H1 (cell line): ENCODE measurements at regions of chr11 and their contacts with region 1.

Region 1: GRCh38 chr11:15826826-15827225 is 529.5 kb downstream of the SOX6 start:
- DNase-seq: peak; percentile 39 to 97
- H3K4me3 ChIP-seq: no peak overlapping the region
- H3K27ac ChIP-seq: no peak overlapping the region
- H3K4me1 ChIP-seq: no peaks in the 10 kb centered on the region
- H3K27me3 ChIP-seq: peaks cover 0 to 3% (median 0%) of the 10 kb centered on the region in 4 experiments; a peak in 1 of 7 replicates
- CTCF ChIP-seq: peak; percentile 88 to 93 (median 89)
- EP300 ChIP-seq: no peak
- POLR2A ChIP-seq: no peak
- RAD21 ChIP-seq: peak; percentile 92

Region 2: DNA sequence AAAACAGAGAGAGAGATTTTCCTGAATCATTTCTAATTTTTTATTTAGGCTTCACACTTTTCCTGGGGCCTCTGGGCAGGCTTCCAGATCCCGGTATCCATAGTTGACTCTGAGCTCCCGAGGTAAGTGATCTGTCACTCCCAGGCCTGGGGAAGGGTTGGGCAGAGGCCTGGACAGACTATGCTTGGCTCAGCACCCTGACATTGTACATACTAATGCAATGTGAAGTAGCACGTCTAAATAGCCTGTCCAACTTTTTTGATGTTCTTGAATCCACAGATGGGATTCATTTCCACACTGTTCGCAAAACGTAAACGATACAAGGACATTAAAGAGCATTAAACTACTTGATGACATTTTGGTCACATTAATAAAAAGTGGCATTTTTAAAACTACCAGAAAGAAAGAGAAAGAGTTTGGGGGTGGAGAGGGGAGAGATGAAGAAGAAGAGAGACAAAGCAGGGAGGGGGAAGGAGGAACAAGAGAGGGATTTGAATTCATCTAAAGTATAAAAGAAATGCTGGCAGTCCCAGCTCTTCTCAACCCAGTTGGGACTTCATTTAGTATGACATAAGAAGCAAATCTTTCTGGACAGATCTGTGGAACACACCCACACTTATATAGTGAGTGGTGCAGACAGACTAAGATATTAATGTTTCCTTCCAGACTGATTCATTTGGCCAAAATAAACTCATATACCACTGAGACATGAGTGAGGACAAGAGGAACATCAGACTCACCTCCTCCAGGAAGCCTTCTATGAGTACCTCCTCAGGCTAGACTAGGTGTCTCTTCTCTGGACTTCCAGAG is 15.3 kb after region 1 on chr11:
- CTCF ChIA-PET with region 1: interaction called, 10 read pairs
- POLR2A ChIA-PET with region 1: no interaction called
- DNase-seq: no peak
- H3K4me3 ChIP-seq: no peak overlapping the region
- H3K27ac ChIP-seq: no peak overlapping the region
- H3K4me1 ChIP-seq: peaks cover 0 to 19% (median 14%) of the 10 kb centered on the region in 4 experiments; a peak in 6 of 7 replicates
- H3K27me3 ChIP-seq: no peaks in the 10 kb centered on the region; a peak in 2 of 7 replicates
- CTCF ChIP-seq: no peak
- EP300 ChIP-seq: no peak
- POLR2A ChIP-seq: no peak
- RAD21 ChIP-seq: no peak

Region 3: DNA sequence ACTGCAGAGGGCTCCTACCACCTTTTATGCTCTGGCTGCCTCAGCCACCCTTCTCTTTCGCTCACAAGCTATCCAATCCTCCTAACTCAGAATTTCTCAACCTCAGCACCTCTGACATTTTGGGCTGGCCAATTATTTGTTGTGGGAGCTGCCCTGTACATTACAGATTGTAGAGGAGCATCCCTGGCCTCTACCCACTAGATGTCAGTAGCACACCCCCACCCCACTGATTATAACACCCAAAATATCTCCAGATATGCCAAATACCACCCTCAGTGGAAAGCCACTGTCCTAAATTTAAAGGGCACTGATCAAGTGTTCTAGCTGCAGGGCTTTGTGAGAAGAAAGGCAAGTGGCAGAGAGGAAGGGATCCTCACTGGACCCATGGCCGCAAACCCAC is 86.4 kb after region 1 on chr11:
- CTCF ChIA-PET with region 1: interaction called, 21 read pairs
- POLR2A ChIA-PET with region 1: no interaction called
- DNase-seq: no peak
- H3K4me3 ChIP-seq: no peak overlapping the region
- H3K27ac ChIP-seq: no peak overlapping the region
- H3K4me1 ChIP-seq: no peaks in the 10 kb centered on the region
- H3K27me3 ChIP-seq: no peaks in the 10 kb centered on the region; a peak in 1 of 7 replicates
- CTCF ChIP-seq: no peak
- EP300 ChIP-seq: no peak
- POLR2A ChIP-seq: no peak
- RAD21 ChIP-seq: no peak; a peak in 1 of 4 replicates

Region 4: DNA sequence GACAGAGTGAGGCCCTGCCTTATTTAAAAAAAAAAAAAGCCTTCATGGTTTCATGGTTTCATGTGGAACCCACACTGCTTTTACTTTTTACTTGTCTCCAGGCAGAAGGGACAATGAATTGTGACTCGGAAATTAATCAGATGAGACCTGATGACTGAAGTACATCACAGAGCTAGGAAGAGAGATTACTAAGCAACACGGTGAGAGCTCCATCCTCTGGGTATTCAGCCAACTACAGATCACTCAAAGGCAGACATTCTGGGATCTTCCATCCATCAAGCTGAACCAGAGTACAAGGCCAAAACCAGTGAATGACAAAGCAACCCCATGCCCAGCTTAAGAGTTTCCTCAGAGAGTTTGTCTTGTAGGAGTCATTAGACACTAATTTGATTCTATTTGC is 96.4 kb after region 1 on chr11:
- CTCF ChIA-PET with region 1: interaction called, 39 read pairs
- POLR2A ChIA-PET with region 1: no interaction called
- DNase-seq: no peak
- H3K4me3 ChIP-seq: no peak overlapping the region
- H3K27ac ChIP-seq: no peak overlapping the region
- H3K4me1 ChIP-seq: no peaks in the 10 kb centered on the region
- H3K27me3 ChIP-seq: no peaks in the 10 kb centered on the region; a peak in 1 of 7 replicates
- CTCF ChIP-seq: peak in 2 of 3 experiments; percentile 50 to 53; a peak in 3 of 4 replicates
- EP300 ChIP-seq: no peak
- POLR2A ChIP-seq: no peak
- RAD21 ChIP-seq: peak; percentile 66 to 71

Region 5: DNA sequence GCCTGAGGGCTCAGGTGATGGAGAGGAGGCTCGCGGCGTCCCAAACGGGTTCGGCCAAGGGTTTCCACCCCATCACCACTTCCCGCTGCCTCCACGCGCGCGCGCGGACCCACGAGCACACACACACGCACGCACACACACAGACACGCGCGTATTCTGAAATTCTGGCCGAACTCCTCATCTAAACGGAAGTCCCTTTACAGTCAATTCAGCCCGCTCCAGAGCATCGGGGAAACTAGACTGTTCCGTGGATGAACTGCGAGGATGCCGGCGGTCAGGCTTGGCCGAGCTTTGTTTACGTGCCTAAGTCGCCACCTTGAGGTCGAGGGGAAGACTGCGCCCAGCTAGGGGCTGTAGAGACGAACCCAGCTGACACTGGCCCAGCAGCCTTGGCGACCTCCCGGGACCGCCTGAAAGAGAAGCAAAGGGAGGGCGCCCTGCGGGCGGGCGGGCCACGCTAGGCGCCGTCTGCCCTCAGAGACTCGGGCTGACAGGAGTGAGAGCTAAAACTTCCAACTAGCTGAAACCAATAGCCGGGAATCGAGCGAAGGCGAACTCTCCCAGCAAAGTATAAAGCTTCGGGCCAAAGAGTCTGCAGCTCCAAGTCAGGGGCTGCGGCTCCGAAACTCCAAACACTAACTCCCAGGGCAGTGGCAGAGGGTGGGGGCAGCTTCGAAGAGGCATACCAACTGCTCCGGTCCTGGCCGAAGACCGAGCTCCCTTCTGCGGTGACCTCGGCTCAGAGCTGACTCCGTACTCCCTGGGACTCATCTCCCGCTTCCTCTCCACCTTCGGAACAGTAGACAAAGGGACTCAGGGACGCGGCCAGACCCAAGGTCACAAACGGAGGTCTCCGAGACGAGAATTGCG is 786.9 kb after region 1 on chr11:
- CTCF ChIA-PET with region 1: interaction called, 12 read pairs
- POLR2A ChIA-PET with region 1: no interaction called
- DNase-seq: peak; percentile 85 to 92
- H3K4me3 ChIP-seq: peak overlapping the region; percentile 8 to 65 (median 52); a peak in 7 of 8 replicates
- H3K27ac ChIP-seq: no peak overlapping the region
- H3K4me1 ChIP-seq: peaks cover 0 to 13% (median 4%) of the 10 kb centered on the region in 4 experiments; a peak in 5 of 7 replicates
- H3K27me3 ChIP-seq: peaks cover 46 to 73% (median 65%) of the 10 kb centered on the region in 4 experiments
- CTCF ChIP-seq: peak; percentile 84 to 93 (median 87)
- EP300 ChIP-seq: no peak; a peak in 1 of 3 replicates
- POLR2A ChIP-seq: no peak
- RAD21 ChIP-seq: peak; percentile 92 to 93